Activated T-helper 1 cell treated with anti-CD3 and anti-CD28 coated beads, Interleukin-12 subunit alpha, Interleukin-12 subunit beta, Interleukin-2, Interleukin-4 antibody, amounts not matched to agents 30 ng/mL and 10 ng/mL and 1 ng/mL, durations not matched to agents 14 hours and 24 hours and 36 hours (primary cell): ENCODE measurements at regions of chr13 and their contacts with region 1.

Region 1: DNA sequence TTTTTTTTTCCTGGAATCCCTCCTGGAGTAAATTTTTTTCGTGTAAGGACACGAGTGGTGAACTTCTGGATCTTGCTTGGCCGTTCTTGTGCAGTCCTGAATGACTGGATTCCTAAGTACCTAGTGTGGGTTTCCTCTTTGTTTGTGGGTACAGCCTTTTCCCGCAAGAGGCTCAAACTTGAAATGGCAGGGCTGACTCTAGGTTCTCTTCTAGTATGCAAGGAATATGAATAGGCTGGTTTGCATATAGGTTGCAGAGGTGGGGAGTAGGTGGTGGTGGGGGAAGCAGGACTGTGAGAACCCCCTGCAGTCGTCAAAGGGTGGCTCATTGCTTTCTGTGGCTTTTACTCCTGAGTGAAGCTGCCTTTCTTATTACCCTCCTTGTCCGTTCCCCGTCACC is 13.6 kb downstream of the UBAC2 start:
- DNase-seq: no peak
- H3K4me3 Mint-ChIP-seq: peak overlapping the region; percentile 72
- H3K27ac Mint-ChIP-seq: peak overlapping the region; percentile 90
- H3K4me1 Mint-ChIP-seq: peaks cover 66% of the 10 kb centered on the region
- H3K27me3 Mint-ChIP-seq: peaks cover 3% of the 10 kb centered on the region

Region 2: GRCh38 chr13:97432917-97433726 is 1781.1 kb before region 1 on chr13:
- intact Hi-C with region 1: loop called (anchors 5 kb)
- DNase-seq: peak; percentile 99
- H3K4me3 Mint-ChIP-seq: peak overlapping the region; percentile 99
- H3K27ac Mint-ChIP-seq: peak overlapping the region; percentile 100
- H3K4me1 Mint-ChIP-seq: peaks cover 39% of the 10 kb centered on the region
- H3K27me3 Mint-ChIP-seq: peaks cover 12% of the 10 kb centered on the region

Region 3: DNA sequence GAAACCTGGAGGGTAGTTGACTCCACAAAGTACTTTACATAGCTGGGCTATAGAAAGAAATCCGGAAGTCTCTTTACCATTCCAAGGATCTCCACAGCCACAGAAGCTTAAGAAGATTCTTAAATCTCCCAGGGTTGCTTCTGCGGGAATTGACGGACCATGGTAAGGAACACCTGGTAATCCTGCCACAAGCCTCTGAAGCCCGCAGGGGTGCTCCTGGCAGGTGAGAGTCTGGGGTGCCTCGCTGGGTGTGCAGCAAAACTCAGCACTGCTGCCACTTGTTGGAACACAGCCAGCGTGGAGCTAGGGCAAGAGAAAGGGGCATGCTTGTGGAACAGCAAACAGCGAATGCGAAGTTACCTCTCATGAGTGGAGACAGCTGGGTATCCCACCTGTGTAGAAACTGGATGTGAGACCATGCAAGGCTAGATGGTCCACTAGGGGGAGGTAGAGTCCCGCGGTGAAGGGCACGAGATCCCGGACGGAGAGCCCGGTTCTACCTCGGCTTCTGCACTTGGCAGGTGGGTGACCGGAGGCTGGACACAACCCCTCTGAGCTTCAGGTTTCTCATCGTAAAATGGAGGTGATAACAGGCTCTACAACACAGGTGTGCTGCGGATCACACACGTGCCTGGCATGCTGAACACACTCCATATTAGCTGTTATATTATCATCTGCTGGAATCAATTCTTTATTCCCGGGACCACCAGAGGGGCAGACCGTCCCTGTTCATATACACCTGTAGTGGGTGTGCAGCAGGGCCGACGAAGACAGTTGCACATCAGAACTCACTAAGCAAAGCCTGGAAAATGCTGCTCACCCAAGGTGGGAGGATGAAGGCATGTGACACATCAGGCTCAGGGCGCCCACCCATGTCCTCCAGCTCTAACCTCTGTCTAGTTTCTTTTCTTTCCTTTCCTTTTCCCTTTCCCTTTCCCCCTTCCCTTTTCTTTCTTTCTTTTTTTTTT is 37.6 kb before region 1 on chr13:
- intact Hi-C with region 1: loop called (anchors 2 kb)
- DNase-seq: peak; percentile 59
- H3K4me3 Mint-ChIP-seq: peak overlapping the region; percentile 40
- H3K27ac Mint-ChIP-seq: no peak overlapping the region
- H3K4me1 Mint-ChIP-seq: peaks cover 24% of the 10 kb centered on the region
- H3K27me3 Mint-ChIP-seq: peaks cover 17% of the 10 kb centered on the region

Region 4: GRCh38 chr13:99228737-99229691 is 14.8 kb after region 1 on chr13:
- intact Hi-C with region 1: loop called (anchors 1 kb)
- DNase-seq: no peak
- H3K4me3 Mint-ChIP-seq: peak overlapping the region; percentile 76
- H3K27ac Mint-ChIP-seq: peak overlapping the region; percentile 93
- H3K4me1 Mint-ChIP-seq: peaks cover 63% of the 10 kb centered on the region
- H3K27me3 Mint-ChIP-seq: peaks cover 2% of the 10 kb centered on the region

Region 5: DNA sequence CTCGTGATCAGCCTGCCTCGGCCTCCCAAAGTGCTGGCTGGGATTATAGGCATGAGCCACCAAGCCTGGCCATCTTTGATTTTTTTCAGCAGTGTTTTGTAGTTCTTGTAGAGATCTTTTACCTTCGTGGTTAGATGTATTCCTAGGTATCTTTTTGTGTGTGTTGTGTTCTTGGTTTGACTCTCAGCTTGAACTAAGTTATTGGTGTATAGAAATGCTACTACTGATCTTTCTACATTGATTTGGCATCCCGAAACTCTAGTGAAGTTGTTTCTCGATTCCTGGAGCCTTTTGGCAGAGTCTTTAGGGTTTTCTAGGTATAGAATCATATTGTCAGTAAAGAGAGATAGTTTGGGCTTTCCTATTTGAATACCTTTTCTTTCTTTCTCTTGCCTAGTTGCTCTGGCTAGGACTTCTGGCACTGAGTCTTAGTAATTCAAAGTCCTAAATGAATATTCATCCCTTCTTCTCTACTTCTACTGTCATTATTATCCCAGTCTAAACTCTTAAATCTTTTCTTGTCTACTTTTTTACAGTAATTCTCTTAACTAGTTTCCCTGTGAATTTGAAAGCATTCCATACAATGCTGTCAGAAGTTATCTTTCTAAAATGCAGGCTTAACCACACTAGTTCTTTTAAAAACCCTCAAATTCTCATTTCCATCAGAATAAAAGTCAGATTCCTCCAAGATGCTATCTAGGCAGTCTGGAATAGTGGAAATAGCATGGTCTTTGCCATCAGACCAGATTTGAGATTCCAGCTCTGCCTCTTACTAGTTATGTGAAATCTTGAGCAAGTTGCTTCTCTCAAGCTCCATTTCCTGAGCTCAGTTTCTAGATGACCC is 37.0 kb after region 1 on chr13:
- intact Hi-C with region 1: loop called (anchors 1 kb)
- DNase-seq: no peak
- H3K4me3 Mint-ChIP-seq: no peak overlapping the region
- H3K27ac Mint-ChIP-seq: no peak overlapping the region
- H3K4me1 Mint-ChIP-seq: peaks cover 42% of the 10 kb centered on the region
- H3K27me3 Mint-ChIP-seq: no peaks in the 10 kb centered on the region

Region 6: GRCh38 chr13:99307648-99308339 is 93.6 kb after region 1 on chr13:
- intact Hi-C with region 1: loop called (anchors 1 kb)
- DNase-seq: peak; percentile 42
- H3K4me3 Mint-ChIP-seq: peak overlapping the region; percentile 83
- H3K27ac Mint-ChIP-seq: peak overlapping the region; percentile 87
- H3K4me1 Mint-ChIP-seq: peaks cover 88% of the 10 kb centered on the region
- H3K27me3 Mint-ChIP-seq: no peaks in the 10 kb centered on the region

Region 7: DNA sequence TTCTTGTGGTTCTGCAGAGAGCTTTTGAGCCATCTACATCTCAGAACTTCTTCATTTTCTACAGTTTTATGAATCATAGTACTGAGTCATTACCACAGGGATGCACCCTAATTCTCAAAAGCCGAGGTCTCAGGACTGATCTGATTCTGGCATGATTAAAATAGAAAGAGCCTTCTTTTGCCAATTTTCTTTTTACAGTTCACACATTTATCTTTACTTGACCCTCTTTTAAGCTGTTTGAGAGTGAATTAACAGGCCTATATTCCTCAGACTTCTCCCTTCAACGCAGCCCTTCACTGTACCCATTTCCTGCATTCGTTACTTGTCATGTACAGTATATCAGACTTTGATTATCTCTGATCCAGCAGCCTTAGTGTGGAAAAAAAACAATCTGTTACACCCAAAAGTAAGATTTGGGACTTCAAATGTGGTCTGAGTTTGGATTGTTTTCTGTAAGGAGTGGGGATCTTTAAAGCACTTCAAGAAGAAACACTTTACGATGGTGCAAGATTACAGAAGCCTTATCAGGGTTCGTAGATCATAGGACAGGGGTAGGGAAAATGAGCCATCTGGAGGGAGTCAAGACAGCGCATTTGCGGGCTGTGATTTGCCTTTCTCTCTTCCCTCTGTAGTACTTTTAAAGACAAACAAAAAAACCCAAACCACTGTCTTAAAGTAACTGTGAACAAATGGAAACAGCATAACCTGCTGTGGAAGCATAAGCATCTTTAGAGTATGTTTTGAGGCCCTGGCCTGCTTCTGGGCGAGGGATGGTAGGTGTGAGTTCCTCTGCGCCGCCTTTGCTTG is 108.3 kb after region 1 on chr13:
- intact Hi-C with region 1: loop called (anchors 1 kb)
- DNase-seq: no peak
- H3K4me3 Mint-ChIP-seq: peak overlapping the region; percentile 38
- H3K27ac Mint-ChIP-seq: peak overlapping the region; percentile 96
- H3K4me1 Mint-ChIP-seq: peaks cover 68% of the 10 kb centered on the region
- H3K27me3 Mint-ChIP-seq: no peaks in the 10 kb centered on the region

Region 8: GRCh38 chr13:99335603-99336002 is 121.4 kb after region 1 on chr13:
- intact Hi-C with region 1: no loop called
- DNase-seq: no peak
- H3K4me3 Mint-ChIP-seq: no peak overlapping the region
- H3K27ac Mint-ChIP-seq: no peak overlapping the region
- H3K4me1 Mint-ChIP-seq: peaks cover 50% of the 10 kb centered on the region
- H3K27me3 Mint-ChIP-seq: no peaks in the 10 kb centered on the region